ENCODE measurements at regions of chr4 and their contacts with region 1.

Region 1: GRCh38 chr4:135226287-135226686 is 1024.7 kb upstream of the PABPC4L start:
- DNase-seq: no peak
- H3K4me3 ChIP-seq: no peak overlapping the region
- H3K27ac ChIP-seq: no peak overlapping the region
- H3K4me1 ChIP-seq: no peaks in the 10 kb centered on the region
- H3K27me3 ChIP-seq: no peaks in the 10 kb centered on the region
- CTCF ChIP-seq: no peak

Region 2: GRCh38 chr4:134567461-134567860 is 658.8 kb before region 1 on chr4:
- CTCF ChIA-PET with region 1: no interaction called
- POLR2A ChIA-PET with region 1: no interaction called
- intact Hi-C with region 1: no loop called
- DNase-seq: no peak
- H3K4me3 ChIP-seq: no peak overlapping the region
- H3K27ac ChIP-seq: no peak overlapping the region
- H3K4me1 ChIP-seq: no peaks in the 10 kb centered on the region
- H3K27me3 ChIP-seq: no peaks in the 10 kb centered on the region
- CTCF ChIP-seq: no peak

Region 3: GRCh38 chr4:135050086-135050717 is 176.1 kb before region 1 on chr4:
- CTCF ChIA-PET with region 1: no interaction called
- POLR2A ChIA-PET with region 1: interaction called, 17 read pairs
- intact Hi-C with region 1: no loop called
- DNase-seq: no peak
- H3K4me3 ChIP-seq: no peak overlapping the region
- H3K27ac ChIP-seq: no peak overlapping the region
- H3K4me1 ChIP-seq: no peaks in the 10 kb centered on the region
- H3K27me3 ChIP-seq: no peaks in the 10 kb centered on the region
- CTCF ChIP-seq: no peak

Measured in PC-9 (cell line).